CD8-positive, alpha-beta T cell (primary cell): ENCODE measurements at regions of chr16 and their contacts with region 1.

Region 1: DNA sequence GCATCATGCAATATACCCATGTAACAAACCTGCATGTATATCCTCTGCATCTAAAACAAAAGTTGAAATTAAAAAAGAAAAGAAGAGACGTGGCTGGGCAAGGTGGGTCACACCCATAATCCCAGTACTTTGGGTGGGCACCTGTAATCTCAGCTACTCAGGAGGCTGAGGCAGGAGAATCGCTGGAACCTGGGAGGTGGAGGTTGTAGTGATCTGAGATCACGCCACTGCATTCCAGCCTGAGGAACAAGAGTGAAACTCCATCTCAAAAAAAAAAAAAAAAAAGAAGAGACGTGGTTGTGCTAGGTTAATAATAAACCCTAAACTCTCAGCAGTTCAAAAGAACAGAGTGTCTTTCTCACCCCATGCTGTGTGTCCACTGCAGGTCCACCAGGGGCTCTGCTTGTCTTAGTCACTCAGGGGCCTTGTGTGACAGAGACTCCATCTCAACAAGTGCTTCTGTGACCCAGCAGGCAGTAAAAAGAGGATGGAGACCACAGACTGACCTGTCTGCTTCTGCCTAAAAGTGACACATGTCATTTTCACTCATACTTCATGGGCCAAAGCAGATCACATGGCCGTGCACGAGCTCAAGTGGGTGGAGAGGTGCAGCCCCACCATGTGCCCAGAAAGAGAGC is 22.3 kb upstream of the N4BP1 start:
- DNase-seq: no peak
- ATAC-seq: no peak
- H3K4me3 ChIP-seq: no peak overlapping the region
- H3K4me3 Mint-ChIP-seq: no peak overlapping the region
- H3K27ac ChIP-seq: no peak overlapping the region
- H3K27ac Mint-ChIP-seq: no peak overlapping the region
- H3K4me1 ChIP-seq: no peaks in the 10 kb centered on the region
- H3K4me1 Mint-ChIP-seq: peaks cover 6% of the 10 kb centered on the region
- H3K27me3 ChIP-seq: no peaks in the 10 kb centered on the region
- H3K27me3 Mint-ChIP-seq: no peaks in the 10 kb centered on the region
- CTCF ChIP-seq: no peak

Region 2: DNA sequence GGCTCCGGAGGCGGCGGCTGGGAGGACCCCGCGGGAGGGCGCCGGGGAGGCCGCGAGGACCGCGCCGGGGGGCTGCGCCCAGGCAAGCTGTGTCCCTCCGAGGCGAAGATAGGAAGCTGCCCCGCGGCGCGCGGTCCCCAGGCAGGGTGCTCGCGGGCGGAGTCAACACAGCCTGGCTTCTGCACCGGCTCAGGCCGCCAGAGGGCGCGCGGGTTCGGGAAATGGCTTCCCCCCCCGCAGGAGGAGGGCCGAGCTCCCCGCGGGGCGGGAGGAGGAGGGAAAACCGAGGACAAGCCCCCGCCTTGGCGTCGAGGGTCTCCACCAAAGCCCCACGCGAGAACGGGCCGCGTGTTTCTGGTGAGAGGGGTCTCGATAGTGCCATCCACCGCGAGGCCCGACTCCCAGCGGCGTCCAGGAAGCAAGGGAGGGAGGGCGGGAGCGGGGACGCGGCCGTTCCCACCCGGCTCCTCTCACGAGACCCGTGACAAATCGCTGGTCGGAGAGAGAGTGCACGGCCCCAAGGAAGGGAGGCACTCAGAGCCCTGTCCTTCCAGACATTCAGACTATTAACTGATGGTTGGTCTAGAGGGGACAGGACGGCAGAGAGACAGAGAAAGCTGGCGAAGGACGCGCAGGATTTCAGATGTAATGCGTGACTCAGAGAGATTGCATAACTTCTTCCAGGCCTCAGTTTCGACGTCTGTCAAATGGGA is 1594.4 kb before region 1 on chr16:
- CTCF ChIA-PET with region 1: no interaction called
- POLR2A ChIA-PET with region 1: no interaction called
- intact Hi-C with region 1: loop called in 1 of 2 experiments (anchors 5 kb)
- DNase-seq: peak; percentile 80 to 95 (median 88)
- ATAC-seq: peak; percentile 98
- H3K4me3 ChIP-seq: peak overlapping the region; percentile 65 to 72
- H3K4me3 Mint-ChIP-seq: peak overlapping the region; percentile 79
- H3K27ac ChIP-seq: no peak overlapping the region
- H3K27ac Mint-ChIP-seq: no peak overlapping the region
- H3K4me1 ChIP-seq: peaks cover 7% of the 10 kb centered on the region
- H3K4me1 Mint-ChIP-seq: peaks cover 5% of the 10 kb centered on the region
- H3K27me3 ChIP-seq: peaks cover 0 to 12% of the 10 kb centered on the region in 2 experiments
- H3K27me3 Mint-ChIP-seq: peaks cover 3% of the 10 kb centered on the region
- CTCF ChIP-seq: peak; percentile 88

Region 3: GRCh38 chr16:48231727-48232492 is 400.3 kb before region 1 on chr16:
- CTCF ChIA-PET with region 1: interaction called, 7 read pairs
- POLR2A ChIA-PET with region 1: no interaction called
- intact Hi-C with region 1: loop called (anchors 1 to 2 kb)
- DNase-seq: peak in 3 of 9 experiments; percentile 13 to 42 (median 33)
- ATAC-seq: peak; percentile 36
- H3K4me3 ChIP-seq: no peak overlapping the region
- H3K4me3 Mint-ChIP-seq: no peak overlapping the region
- H3K27ac ChIP-seq: no peak overlapping the region
- H3K27ac Mint-ChIP-seq: no peak overlapping the region
- H3K4me1 ChIP-seq: no peaks in the 10 kb centered on the region
- H3K4me1 Mint-ChIP-seq: no peaks in the 10 kb centered on the region
- H3K27me3 ChIP-seq: no peaks in the 10 kb centered on the region
- H3K27me3 Mint-ChIP-seq: peaks cover 13% of the 10 kb centered on the region
- CTCF ChIP-seq: peak; percentile 39

Region 4: GRCh38 chr16:48353565-48354163 is 278.6 kb before region 1 on chr16:
- CTCF ChIA-PET with region 1: interaction called, 82 read pairs
- POLR2A ChIA-PET with region 1: no interaction called
- intact Hi-C with region 1: loop called (anchors 1 kb)
- DNase-seq: peak; percentile 37 to 88 (median 69)
- ATAC-seq: peak; percentile 97
- H3K4me3 ChIP-seq: no peak overlapping the region
- H3K4me3 Mint-ChIP-seq: no peak overlapping the region
- H3K27ac ChIP-seq: no peak overlapping the region
- H3K27ac Mint-ChIP-seq: peak overlapping the region; percentile 18
- H3K4me1 ChIP-seq: peaks cover 3% of the 10 kb centered on the region
- H3K4me1 Mint-ChIP-seq: peaks cover 8% of the 10 kb centered on the region
- H3K27me3 ChIP-seq: no peaks in the 10 kb centered on the region
- H3K27me3 Mint-ChIP-seq: no peaks in the 10 kb centered on the region
- CTCF ChIP-seq: peak; percentile 92

Region 5: GRCh38 chr16:48556913-48557351 is 75.3 kb before region 1 on chr16:
- CTCF ChIA-PET with region 1: interaction called, 14 read pairs
- POLR2A ChIA-PET with region 1: no interaction called
- intact Hi-C with region 1: no loop called
- DNase-seq: peak in 2 of 9 experiments; percentile 27 to 30
- ATAC-seq: peak; percentile 45
- H3K4me3 ChIP-seq: no peak overlapping the region
- H3K4me3 Mint-ChIP-seq: no peak overlapping the region
- H3K27ac ChIP-seq: no peak overlapping the region
- H3K27ac Mint-ChIP-seq: peak overlapping the region; percentile 38
- H3K4me1 ChIP-seq: peaks cover 47% of the 10 kb centered on the region
- H3K4me1 Mint-ChIP-seq: peaks cover 80% of the 10 kb centered on the region
- H3K27me3 ChIP-seq: no peaks in the 10 kb centered on the region
- H3K27me3 Mint-ChIP-seq: no peaks in the 10 kb centered on the region
- CTCF ChIP-seq: no peak

Region 6: GRCh38 chr16:48617711-48618148 is 14.5 kb before region 1 on chr16:
- CTCF ChIA-PET with region 1: interaction called, 15 read pairs
- POLR2A ChIA-PET with region 1: interaction called, 5 read pairs
- intact Hi-C with region 1: no loop called
- DNase-seq: no peak
- ATAC-seq: no peak
- H3K4me3 ChIP-seq: no peak overlapping the region
- H3K4me3 Mint-ChIP-seq: no peak overlapping the region
- H3K27ac ChIP-seq: no peak overlapping the region
- H3K27ac Mint-ChIP-seq: peak overlapping the region; percentile 32
- H3K4me1 ChIP-seq: peaks cover 36% of the 10 kb centered on the region
- H3K4me1 Mint-ChIP-seq: peaks cover 59% of the 10 kb centered on the region
- H3K27me3 ChIP-seq: no peaks in the 10 kb centered on the region
- H3K27me3 Mint-ChIP-seq: no peaks in the 10 kb centered on the region
- CTCF ChIP-seq: no peak